Esophagus muscularis mucosa (tissue), 4 donors: ENCODE measurements at regions of chr17 and their contacts with region 1.

Region 1: GRCh38 chr17:40303009-40303657 is 5.8 kb upstream of the RARA start:
- DNase-seq: no peak
- H3K4me3 ChIP-seq: no peak overlapping the region
- H3K27ac ChIP-seq: peak overlapping the region; percentile 1 to 48 (median 42)
- H3K4me1 ChIP-seq: peaks cover 51 to 68% (median 58%) of the 10 kb centered on the region in 4 donors
- H3K27me3 ChIP-seq: no peaks in the 10 kb centered on the region
- CTCF ChIP-seq: peak; percentile 76 to 93 (median 77)
- EP300 ChIP-seq: no peak
- POLR2A ChIP-seq: no peak

Region 2: GRCh38 chr17:40355123-40355803 is 52.1 kb after region 1 on chr17:
- intact Hi-C with region 1: loop called (anchors 1 kb)
- DNase-seq: no peak
- H3K4me3 ChIP-seq: no peak overlapping the region
- H3K27ac ChIP-seq: peak overlapping the region; percentile 55 to 66 (median 61)
- H3K4me1 ChIP-seq: peaks cover 27 to 79% (median 64%) of the 10 kb centered on the region in 4 donors
- H3K27me3 ChIP-seq: no peaks in the 10 kb centered on the region
- CTCF ChIP-seq: peak in 2 of 3 experiments; percentile 96 to 99
- EP300 ChIP-seq: no peak
- POLR2A ChIP-seq: no peak

Region 3: GRCh38 chr17:40417609-40418427 is 114.7 kb after region 1 on chr17 and contains the start of gene TOP2A:
- intact Hi-C with region 1: loop called (anchors 10 kb)
- DNase-seq: peak; percentile 100
- H3K4me3 ChIP-seq: peak within 1 kb of the TSS; percentile 60 to 71 (median 63)
- H3K27ac ChIP-seq: peak within 1 kb of the TSS; percentile 64 to 82 (median 76)
- H3K4me1 ChIP-seq: peaks cover 12 to 35% (median 30%) of the 10 kb centered on the region in 4 donors
- H3K27me3 ChIP-seq: peaks cover 0 to 8% (median 0%) of the 10 kb centered on the region in 4 donors
- CTCF ChIP-seq: peak in 1 of 3 experiments; percentile 50
- EP300 ChIP-seq: no peak
- POLR2A ChIP-seq: no peak
- total RNA-seq, gene TOP2A: under 0.01 to 1.4 (median 0.30) TPM

Region 4: GRCh38 chr17:40536295-40537171 is 233.4 kb after region 1 on chr17:
- intact Hi-C with region 1: loop called (anchors 5 kb)
- DNase-seq: no peak
- H3K4me3 ChIP-seq: no peak overlapping the region
- H3K27ac ChIP-seq: peak overlapping the region; percentile 54 to 90 (median 61)
- H3K4me1 ChIP-seq: peaks cover 77 to 86% (median 86%) of the 10 kb centered on the region in 4 donors
- H3K27me3 ChIP-seq: no peaks in the 10 kb centered on the region
- CTCF ChIP-seq: no peak
- EP300 ChIP-seq: peak; percentile 67
- POLR2A ChIP-seq: no peak